B cell (primary cell): ENCODE measurements at regions of chr20 and their contacts with region 1.

Region 1: DNA sequence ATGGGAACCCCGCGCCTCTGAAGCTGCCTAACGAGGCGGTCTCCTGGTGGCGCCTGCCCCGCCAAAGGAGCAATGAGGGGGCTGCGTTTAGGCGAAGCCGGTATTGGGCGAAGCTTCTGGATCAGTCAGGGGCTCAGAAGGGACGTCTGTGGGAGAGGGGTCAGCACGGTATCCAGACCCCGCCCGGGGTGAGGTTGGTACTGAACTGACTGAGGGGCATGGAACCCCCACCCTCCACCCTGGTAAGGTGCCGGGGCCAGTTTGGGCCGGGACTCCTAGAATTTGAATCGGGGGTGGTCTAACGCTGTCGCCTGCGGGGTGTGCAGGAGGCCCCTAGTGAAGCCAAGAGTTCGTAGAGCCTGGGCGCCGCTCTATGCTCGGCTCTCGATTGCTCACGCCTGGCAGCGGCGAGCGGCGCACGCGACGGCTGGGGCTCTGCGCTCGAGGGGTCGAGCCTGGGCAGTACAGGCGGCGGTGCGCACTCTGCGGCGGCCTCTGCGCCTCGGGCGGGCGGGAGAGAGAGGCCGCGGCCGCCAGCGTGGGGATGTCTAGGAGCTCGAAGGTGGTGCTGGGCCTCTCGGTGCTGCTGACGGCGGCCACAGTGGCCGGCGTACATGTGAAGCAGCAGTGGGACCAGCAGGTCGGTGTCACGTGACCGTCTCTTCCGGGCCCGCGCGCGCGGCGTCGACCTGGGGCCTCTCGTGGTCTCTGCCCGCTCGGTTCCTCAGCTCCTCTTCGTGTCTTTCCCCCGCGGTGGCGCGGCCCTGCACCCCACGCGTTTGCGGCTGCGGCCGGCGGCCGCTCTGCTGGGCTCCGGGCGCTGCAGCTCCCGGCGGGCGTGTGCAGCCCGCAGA is at the starts of genes KAT14 and PET117:
- DNase-seq: peak; percentile 97
- ATAC-seq: peak; percentile 88
- H3K4me3 ChIP-seq: peak within 1 kb of the TSS; percentile 48 to 93 (median 85)
- H3K4me3 Mint-ChIP-seq: peak within 1 kb of the TSS; percentile 92
- H3K27ac ChIP-seq: peak within 1 kb of the TSS; percentile 65 to 77
- H3K27ac Mint-ChIP-seq: peak within 1 kb of the TSS; percentile 95
- H3K4me1 ChIP-seq: peaks cover 15 to 25% of the 10 kb centered on the region in 2 donors
- H3K4me1 Mint-ChIP-seq: peaks cover 27% of the 10 kb centered on the region
- H3K27me3 ChIP-seq: peaks cover 0 to 4% (median 0%) of the 10 kb centered on the region in 4 experiments
- H3K27me3 Mint-ChIP-seq: no peaks in the 10 kb centered on the region
- CTCF ChIP-seq: no peak
- total RNA-seq, gene KAT14: 15.1 and 15.5 TPM in 2 replicates
- total RNA-seq, gene PET117: 10.7 and 13.0 TPM in 2 replicates

Region 2: DNA sequence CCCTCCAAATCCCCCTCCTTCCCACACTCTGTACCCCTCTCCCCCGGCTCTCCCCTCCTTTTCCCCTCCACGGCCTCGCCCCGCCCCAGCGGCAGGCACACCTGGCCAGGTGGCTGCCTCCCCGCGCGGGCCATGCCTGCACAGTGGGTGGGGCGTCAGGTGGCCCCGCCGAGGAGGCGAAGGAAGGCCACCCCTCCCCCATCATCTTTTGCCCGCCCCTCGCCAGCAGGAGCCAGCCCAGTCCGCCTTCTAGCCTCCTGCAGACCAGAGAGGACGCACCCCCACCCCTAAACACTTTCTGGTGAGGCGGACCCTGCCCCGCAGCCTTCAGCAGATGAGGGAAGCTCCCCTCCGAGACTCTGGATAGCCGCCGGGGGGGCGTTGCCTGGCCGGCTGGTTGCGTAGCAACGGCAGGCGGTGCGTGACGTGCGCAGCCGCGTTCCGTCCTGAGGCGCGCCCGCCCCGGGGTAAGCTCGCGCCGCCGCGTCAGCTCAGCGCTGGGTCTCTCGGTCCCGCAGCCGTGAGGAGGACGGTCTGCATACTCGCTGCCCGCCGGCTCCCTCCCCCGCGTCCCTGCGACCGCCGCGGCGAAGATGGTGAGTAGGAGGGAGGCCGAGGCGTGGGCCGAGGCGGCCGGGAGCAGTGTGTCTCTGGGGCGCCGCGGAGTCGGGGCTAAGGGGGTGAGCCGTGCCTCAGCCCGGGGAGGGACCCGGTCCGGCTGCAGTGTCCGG is 567.9 kb before region 1 on chr20 and contains the start of gene DSTN:
- CTCF ChIA-PET with region 1: no interaction called
- POLR2A ChIA-PET with region 1: no interaction called
- intact Hi-C with region 1: loop called (anchors 2 kb)
- DNase-seq: peak; percentile 93
- ATAC-seq: peak; percentile 91
- H3K4me3 ChIP-seq: peak within 1 kb of the TSS; percentile 77 to 97 (median 83)
- H3K4me3 Mint-ChIP-seq: peak within 1 kb of the TSS; percentile 94
- H3K27ac ChIP-seq: peak within 1 kb of the TSS in 1 of 2 donors; percentile 72
- H3K27ac Mint-ChIP-seq: peak within 1 kb of the TSS; percentile 89
- H3K4me1 ChIP-seq: peaks cover 11 to 14% of the 10 kb centered on the region in 2 donors
- H3K4me1 Mint-ChIP-seq: peaks cover 20% of the 10 kb centered on the region
- H3K27me3 ChIP-seq: peaks cover 0 to 12% (median 2%) of the 10 kb centered on the region in 4 experiments
- H3K27me3 Mint-ChIP-seq: peaks cover 8% of the 10 kb centered on the region
- CTCF ChIP-seq: no peak
- total RNA-seq, gene DSTN: 12.9 and 13.4 TPM in 2 replicates

Region 3: GRCh38 chr20:18197382-18198131 is 59.9 kb after region 1 on chr20:
- CTCF ChIA-PET with region 1: no interaction called
- POLR2A ChIA-PET with region 1: no interaction called
- intact Hi-C with region 1: no loop called
- DNase-seq: no peak
- ATAC-seq: no peak
- H3K4me3 ChIP-seq: no peak overlapping the region
- H3K4me3 Mint-ChIP-seq: no peak overlapping the region
- H3K27ac ChIP-seq: no peak overlapping the region
- H3K27ac Mint-ChIP-seq: no peak overlapping the region
- H3K4me1 ChIP-seq: no peaks in the 10 kb centered on the region
- H3K4me1 Mint-ChIP-seq: no peaks in the 10 kb centered on the region
- H3K27me3 ChIP-seq: no peaks in the 10 kb centered on the region
- H3K27me3 Mint-ChIP-seq: no peaks in the 10 kb centered on the region
- CTCF ChIP-seq: no peak

Region 4: DNA sequence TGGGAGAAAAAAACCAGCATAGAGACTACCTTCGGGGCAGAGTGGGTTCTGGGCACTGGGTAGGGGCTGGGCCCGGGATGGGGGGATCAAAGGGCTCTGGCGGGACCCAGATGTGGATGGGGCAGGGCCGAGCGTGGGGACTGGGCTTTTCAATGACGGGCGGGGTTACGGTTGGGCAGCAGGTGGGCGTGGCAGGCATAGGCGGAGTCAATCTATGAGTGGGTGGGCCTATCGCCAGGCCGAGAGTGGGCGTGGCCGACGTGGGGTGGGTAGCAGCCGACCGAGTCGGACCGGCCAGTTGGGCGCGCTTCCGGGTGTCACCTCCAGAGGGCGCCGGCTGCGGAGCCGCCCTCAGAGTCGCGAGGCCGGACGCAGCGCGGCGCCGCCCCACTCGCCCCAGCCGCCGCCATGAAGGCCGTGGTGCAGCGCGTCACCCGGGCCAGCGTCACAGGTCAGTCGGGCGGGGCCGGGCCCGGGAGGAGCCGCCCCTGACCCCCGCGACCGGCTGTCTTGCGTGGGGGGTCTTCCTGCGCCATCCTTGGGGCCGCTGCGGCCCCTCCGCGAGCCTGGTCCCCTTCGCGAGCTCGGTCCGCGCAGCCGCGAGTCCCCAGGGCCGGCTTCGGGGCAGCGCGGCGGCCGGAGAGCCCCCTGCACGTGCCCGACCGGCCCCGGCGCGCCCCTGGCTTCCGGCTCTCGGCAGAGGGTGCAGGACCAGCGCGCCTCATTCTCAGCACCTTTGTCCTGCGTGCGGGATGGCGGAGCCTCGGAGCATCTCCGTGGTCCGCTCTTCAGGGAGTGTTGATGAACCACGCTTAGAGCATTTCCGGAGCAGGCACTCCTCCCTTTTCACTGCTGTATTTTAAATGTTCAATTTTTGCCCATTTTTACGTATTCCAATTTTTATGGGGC is 450.3 kb after region 1 on chr20 and contains the start of gene DTD1:
- CTCF ChIA-PET with region 1: no interaction called
- POLR2A ChIA-PET with region 1: no interaction called
- intact Hi-C with region 1: loop called (anchors 5 kb)
- DNase-seq: peak; percentile 89
- ATAC-seq: peak; percentile 96
- H3K4me3 ChIP-seq: peak within 1 kb of the TSS; percentile 47 to 77 (median 73)
- H3K4me3 Mint-ChIP-seq: peak within 1 kb of the TSS; percentile 94
- H3K27ac ChIP-seq: peak within 1 kb of the TSS; percentile 44 to 58
- H3K27ac Mint-ChIP-seq: peak within 1 kb of the TSS; percentile 86
- H3K4me1 ChIP-seq: peaks cover 17% of the 10 kb centered on the region in 2 donors
- H3K4me1 Mint-ChIP-seq: peaks cover 23% of the 10 kb centered on the region
- H3K27me3 ChIP-seq: peaks cover 0 to 10% (median 2%) of the 10 kb centered on the region in 4 experiments
- H3K27me3 Mint-ChIP-seq: peaks cover 8% of the 10 kb centered on the region
- CTCF ChIP-seq: peak; percentile 68
- total RNA-seq, gene DTD1: 18.7 and 18.9 TPM in 2 replicates